Right ventricle myocardium inferior (tissue), 1 donor: ENCODE measurements at regions of chr15 and their contacts with region 1.

Region 1: DNA sequence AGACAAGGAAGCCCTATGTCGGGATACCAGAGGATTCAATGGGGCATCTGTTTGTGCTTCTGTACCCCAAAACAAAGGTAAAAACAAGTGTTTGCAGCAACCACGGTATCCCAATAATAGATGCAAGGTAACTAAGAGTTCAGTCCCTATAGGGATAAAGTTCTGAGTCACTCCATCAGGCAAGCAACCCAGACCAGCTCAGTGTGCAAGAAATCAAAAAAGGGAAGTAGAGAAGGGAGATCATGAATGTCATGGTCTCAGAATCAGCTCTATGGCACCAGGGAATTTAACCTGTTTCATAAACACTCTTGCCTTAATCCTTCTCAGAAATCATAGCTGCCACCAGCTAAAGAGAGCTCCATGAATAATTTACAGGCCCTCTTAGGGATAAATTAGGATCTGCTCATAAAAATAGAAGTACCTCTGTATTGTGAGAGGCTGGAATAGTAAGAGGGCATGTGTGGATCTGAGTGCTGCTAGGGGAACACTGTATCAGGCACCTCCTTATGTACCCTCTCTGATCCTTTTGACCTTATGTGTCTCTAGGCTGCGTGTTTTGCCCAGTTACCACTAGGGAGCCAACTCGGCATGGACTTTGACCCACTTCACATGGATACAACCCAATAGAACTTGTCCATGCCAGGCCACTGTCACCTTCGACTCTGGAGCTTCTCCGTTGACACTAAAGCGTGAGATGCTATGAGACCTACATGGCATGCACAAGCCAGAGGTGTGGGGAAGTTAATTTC is 754.6 kb downstream of the AGBL1 start:
- DNase-seq: no peak
- ATAC-seq: peak; percentile 95

Region 2: DNA sequence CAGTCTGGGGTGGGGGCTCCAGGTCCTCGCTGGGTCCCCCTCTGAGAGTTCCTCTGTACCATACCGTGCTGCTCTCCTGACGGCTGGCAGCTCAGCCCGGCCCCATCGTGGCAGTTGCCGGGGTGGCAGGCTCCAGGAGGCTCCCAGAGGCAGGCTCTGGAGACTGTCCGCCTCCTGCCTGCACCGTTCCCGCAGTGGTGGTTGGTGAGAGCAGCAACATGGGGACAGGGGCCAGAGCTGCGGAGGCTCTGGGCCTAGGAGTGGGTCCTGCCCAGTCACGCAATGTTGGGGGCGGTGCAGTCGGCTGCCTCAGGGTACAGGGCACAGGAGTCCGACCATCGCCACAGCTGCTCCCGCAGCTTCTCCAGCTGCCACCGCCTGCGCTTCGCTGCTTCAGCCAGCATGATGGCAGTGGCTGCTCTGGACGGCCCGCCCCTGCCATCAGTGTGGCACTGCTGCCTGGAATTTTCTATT is 261.9 kb before region 1 on chr15:
- intact Hi-C with region 1: no loop called
- DNase-seq: peak; percentile 30
- ATAC-seq: peak; percentile 50

Region 3: DNA sequence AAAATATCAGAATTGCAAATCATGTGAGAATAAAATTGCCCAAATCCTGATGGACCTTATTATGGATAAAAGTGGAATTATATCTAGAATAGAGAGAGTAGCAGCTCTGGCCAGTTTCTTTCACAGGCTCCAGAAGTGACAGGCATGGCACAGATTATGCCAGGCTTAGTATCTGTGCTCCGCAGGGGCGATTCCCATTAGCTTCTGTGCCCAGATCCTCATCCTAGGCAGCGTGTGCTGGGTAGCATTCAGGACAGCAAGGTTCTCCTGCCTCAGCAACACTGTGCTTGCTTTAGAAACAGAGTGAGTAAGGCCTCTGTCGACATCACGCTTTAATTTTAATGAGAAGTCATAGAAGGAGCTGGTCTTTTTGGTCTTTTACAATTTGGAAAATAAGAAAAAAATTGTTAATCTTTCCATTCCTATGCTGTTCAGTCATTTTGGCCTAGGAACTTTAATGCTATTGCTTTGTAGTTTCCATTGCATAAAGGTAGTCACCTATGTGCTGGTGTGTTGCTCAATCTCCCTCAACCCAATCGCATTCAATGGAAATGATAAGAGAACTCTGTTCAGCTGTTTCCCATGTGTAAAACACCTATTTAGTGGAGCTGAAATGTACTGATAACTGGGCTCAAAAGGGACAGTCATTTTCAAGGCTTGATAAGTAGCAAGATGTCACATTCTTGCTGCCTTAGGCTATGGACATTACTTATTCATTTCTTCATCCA is 15.4 kb after region 1 on chr15:
- intact Hi-C with region 1: loop called (anchors 1 kb)
- DNase-seq: no peak
- ATAC-seq: peak; percentile 96